ENCODE measurements at regions of chr5 and their contacts with region 1.

Region 1: DNA sequence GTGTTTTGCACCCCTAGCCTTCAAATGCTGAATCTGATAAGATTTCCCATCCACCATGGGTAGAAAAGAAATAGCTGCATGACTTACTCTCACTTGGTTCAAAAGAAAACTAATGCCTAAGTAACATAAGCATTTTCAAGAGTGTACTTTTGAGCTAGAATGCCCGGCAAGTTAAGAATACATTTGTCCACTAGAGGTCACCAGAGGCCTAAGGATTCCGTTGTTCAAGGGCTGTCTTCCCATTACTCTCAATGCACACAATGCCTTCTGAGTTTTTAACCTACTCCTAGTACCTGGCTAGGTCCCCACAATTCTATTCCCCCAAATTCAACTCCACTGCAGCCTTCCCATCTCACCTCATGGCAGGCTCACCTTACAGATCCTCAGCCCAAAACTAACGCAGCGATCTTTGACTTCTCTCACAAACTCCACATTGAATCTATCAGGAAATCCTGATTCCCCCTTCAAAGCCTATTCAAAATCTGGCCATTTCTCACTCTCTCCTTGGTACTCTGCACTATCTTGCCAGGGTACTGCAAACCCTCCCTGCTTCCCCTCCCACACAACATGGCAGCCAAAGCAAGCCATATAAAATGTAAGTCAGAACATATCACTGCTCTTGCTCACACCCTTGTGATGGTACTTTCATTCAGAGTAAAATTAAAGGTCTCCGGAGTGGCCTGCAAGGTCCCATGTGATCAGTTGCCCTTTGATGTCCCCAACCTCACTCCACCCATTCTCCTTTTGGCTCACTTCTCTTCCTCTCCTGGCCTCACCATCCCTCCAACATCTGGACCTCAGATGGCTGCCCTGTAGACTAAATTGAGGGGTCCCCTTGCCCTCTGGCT is 13.4 kb downstream of the OXCT1 start:
- DNase-seq: peak; percentile 54
- CTCF ChIP-seq: peak; percentile 82

Region 2: DNA sequence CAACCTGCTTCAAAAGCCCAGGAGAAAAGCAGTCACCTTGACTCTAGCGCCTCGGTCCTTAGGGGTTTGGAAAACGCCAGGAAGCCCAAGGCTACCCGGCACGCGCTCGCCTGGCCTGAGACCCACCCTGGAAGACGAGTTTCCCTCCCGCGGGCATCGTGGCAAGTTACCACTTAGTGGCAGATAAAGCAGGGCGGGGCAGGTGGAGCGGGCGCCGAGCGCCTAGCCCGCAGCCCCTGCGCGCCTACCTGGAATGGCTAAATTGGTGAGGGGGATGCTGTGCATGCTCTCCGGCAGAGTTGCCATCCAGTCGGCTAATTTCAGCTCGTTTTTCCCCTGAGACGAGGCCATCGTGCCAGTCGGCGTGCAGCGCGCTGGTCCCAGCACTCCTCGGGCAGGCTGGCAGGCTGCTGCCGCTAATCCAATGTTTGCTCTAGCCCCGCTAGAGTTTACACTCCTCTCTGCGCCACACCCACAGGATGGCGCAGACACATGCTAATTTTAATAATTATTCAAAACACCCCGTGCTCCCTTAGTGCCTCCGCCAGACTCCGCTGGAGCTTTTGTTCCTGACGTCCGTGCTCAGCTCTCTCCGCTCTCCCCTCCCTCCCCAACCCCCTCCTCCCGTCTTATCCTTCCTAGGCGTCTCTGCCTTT is 346.6 kb before region 1 on chr5 and contains the start of gene PLCXD3:
- CTCF ChIA-PET with region 1: no interaction called
- POLR2A ChIA-PET with region 1: no interaction called
- DNase-seq: no peak
- CTCF ChIP-seq: no peak

Region 3: GRCh38 chr5:41707853-41708603 is 148.8 kb before region 1 on chr5:
- CTCF ChIA-PET with region 1: interaction called, 14 read pairs
- POLR2A ChIA-PET with region 1: no interaction called
- DNase-seq: peak; percentile 34
- CTCF ChIP-seq: peak; percentile 53

Region 4: DNA sequence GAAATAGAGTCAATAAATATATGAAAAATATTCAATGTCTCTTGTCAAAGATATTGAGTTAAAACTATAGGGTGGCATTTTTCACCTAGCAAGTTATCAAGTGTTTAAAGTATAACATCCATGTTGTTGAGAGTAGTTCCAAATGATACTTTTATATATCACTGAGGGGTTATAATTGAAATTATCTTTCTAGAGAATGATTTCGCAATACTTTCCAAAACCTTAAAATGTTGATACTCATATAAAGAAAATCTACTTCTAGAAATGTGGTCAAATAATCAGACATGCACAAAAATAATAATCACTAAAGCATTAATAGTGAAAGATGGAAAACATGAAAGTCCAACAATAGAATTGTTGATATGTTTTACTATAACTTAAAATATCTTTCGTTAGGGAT is 36.7 kb before region 1 on chr5:
- CTCF ChIA-PET with region 1: no interaction called
- POLR2A ChIA-PET with region 1: no interaction called
- DNase-seq: no peak
- CTCF ChIP-seq: no peak

Region 5: DNA sequence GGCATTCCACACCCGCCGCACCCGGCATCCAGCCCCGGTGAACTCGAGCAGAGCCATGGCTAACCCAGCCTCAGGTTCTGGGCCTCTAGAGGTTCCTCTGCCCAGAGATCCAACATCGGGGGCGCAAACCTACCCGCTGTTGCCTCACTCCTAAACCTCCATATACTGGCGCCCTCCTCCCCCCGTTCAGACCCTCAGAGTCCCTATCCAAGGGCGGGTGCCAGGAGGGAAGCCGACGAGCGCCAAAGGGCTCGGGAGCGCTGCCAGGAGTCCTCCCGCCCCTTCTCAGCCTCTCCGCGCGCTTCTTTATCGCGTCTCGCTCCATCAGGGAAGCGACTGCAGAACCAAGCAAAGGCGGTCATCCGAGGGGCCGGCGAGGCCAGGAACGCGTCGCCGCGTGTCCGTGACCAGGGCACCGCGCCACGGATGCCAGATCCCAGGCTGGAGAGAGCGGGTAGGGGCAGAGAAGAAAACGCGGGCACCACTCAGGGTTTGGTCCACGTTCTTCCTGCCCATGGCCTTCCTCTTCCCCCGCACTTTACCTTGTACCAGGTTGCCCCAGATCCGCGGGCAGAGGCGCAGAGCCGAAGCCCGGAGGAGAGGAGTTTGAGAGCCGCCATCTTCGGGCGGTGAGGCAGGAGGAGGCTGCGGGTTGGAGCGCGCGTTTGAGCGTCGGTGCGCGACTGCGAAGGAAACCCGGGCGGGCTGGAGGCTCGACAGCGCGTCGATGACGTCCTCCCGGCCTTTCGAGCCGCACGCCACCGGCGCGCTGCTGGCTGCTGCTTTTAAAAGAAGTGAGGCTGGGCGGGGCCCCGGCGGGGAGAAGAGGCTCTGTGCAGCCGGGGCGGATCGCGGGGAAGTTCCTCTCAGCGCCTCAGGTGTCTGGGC is 13.1 kb after region 1 on chr5 and contains the start of gene OXCT1:
- CTCF ChIA-PET with region 1: interaction called, 76 read pairs
- POLR2A ChIA-PET with region 1: no interaction called
- DNase-seq: peak; percentile 93
- CTCF ChIP-seq: no peak

Region 6: DNA sequence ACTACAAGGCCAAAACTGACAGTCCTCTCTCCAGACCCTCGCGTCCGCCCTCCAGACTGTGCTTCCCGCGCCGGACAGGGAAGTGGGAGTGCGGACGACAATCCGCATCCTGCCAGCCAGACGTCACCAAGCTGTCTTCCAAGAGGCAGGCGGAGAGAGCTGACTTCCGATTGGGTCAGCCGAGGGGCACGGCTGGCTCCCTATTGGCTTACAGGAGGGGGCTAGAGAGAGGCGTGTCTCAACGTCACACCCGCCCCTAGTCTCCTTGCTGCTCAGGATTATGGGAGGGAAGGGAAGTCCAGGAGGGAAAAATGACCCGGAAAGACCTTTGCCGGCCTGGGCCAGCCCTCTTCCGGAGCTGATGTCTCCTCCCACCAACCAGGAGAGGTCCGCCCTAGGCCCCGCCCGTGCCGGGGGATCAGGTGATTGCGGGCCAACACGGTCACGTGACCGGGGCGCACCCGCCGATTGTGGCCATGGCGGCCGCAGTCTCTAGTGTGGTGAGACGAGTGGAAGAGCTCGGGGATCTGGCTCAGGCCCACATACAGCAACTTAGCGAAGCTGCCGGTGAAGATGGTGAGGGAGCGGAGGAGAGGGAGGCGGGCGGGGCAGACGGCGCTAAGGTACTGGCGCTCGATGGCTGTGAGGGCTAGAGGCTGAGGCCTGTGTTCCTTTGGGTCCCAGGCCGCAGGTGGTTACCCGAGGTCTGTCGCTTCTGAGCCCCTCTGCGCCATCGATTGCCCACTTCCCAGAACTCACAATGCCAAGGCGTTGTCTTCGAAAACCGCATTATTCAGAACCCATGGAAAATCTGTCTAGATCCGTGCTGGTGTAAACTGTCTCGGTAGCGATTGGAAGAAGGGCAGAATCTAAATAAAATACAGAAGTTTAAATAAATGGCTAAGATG is 47.3 kb after region 1 on chr5 and contains the start of gene RIMOC1:
- CTCF ChIA-PET with region 1: interaction called, 12 read pairs
- POLR2A ChIA-PET with region 1: no interaction called
- DNase-seq: peak; percentile 93
- CTCF ChIP-seq: no peak

Region 7: GRCh38 chr5:42321785-42322184 is 464.9 kb after region 1 on chr5:
- CTCF ChIA-PET with region 1: no interaction called
- POLR2A ChIA-PET with region 1: no interaction called
- DNase-seq: no peak
- CTCF ChIP-seq: no peak

Region 8: GRCh38 chr5:42583322-42583721 is 726.5 kb after region 1 on chr5:
- CTCF ChIA-PET with region 1: interaction called, 14 read pairs
- POLR2A ChIA-PET with region 1: no interaction called
- DNase-seq: peak; percentile 64
- CTCF ChIP-seq: peak; percentile 90